HepG2 (cell line): ENCODE measurements at regions of chr15 and their contacts with region 1.

Region 1: DNA sequence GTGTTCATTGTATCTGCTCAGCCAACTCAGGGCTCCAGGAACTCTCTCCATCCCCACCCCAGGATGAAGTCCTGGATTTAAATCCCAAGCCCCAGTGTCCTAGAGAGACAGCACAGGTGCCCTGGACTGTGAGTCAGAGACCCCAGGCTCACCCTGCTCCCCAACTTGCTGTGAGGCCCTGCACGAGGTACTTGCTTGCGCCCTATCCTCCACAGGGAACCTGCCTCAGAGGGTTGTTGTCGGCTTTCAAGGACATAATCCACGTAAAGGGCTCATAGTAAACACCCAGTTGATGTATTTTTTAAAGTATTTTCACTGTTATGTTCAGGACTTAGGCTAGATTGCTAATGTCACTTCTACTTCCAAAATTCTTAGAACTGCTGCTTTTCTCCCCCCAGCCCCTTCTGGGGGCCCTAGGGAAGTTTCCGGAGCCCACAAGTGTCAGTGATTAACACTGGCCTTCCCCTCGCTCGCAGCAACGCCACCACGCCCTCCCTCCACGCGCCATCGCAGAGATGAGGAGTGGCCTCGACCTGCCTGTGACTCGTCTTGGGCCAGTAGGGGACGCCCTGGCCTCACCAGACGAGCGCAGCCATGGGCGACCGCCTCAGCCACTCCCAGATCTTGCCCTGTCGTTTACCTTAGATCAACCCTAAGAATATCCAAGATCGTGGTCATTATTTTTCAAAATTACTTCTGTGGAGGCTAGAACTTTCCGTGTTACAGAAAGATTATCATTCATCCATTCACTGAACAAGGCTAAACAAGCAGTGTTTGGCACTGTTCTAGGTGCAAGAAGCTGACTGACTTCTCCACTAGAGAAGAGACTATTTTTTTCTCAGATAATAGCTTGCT is 6.0 kb upstream of the SRP14 start:
- DNase-seq: peak; percentile 56
- ATAC-seq: peak; percentile 88
- H3K4me3 ChIP-seq: peak overlapping the region; percentile 14 to 60 (median 50); a peak in 5 of 6 replicates
- H3K27ac ChIP-seq: peak overlapping the region; percentile 15
- H3K4me1 ChIP-seq: peaks cover 54% of the 10 kb centered on the region
- H3K27me3 ChIP-seq: no peaks in the 10 kb centered on the region
- CTCF ChIP-seq: peak; percentile 99
- EP300 ChIP-seq: no peak
- POLR2A ChIP-seq: no peak
- RAD21 ChIP-seq: peak; percentile 98

Region 2: DNA sequence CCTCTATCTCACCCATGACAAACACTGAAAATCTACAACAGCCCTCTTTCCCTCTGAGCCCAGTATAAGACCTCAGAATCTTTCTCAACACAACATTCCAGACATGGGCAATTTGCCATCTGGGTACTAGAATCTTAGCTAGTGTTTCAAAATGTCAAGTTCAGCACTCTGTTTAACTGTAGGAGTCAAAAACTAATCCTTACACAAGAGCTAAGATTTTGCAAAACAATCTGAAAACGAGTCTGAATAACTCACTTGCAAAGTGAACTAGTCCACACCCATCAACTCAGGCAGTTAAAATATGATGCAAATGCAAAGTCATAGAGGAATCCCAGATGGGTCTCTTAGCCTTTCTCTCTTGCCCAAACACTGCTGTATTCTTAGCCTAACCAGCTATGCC is 192.7 kb before region 1 on chr15:
- CTCF ChIA-PET with region 1: no interaction called
- POLR2A ChIA-PET with region 1: no interaction called
- in situ Hi-C with region 1: no loop called
- intact Hi-C with region 1: no loop called
- DNase-seq: no peak
- ATAC-seq: no peak
- H3K4me3 ChIP-seq: no peak overlapping the region
- H3K27ac ChIP-seq: no peak overlapping the region
- H3K4me1 ChIP-seq: no peaks in the 10 kb centered on the region
- H3K27me3 ChIP-seq: no peaks in the 10 kb centered on the region; a peak in 1 of 5 replicates
- CTCF ChIP-seq: no peak
- EP300 ChIP-seq: no peak
- POLR2A ChIP-seq: no peak
- RAD21 ChIP-seq: no peak

Region 3: GRCh38 chr15:40069178-40070165 is 24.5 kb after region 1 on chr15:
- CTCF ChIA-PET with region 1: no interaction called
- POLR2A ChIA-PET with region 1: interaction called, 12 read pairs
- in situ Hi-C with region 1: no loop called
- intact Hi-C with region 1: no loop called
- DNase-seq: peak; percentile 76
- ATAC-seq: peak; percentile 80
- H3K4me3 ChIP-seq: peak overlapping the region; percentile 55 to 69 (median 58); a peak in 5 of 6 replicates
- H3K27ac ChIP-seq: peak overlapping the region; percentile 69
- H3K4me1 ChIP-seq: peaks cover 47% of the 10 kb centered on the region
- H3K27me3 ChIP-seq: no peaks in the 10 kb centered on the region
- CTCF ChIP-seq: no peak; the same call in 1 of the 2 replicates
- EP300 ChIP-seq: no peak
- POLR2A ChIP-seq: peak in 1 of 2 experiments; percentile 50; a peak in 1 of 4 replicates
- RAD21 ChIP-seq: peak; percentile 66

Region 4: GRCh38 chr15:40081691-40082194 is 36.8 kb after region 1 on chr15:
- CTCF ChIA-PET with region 1: no interaction called
- POLR2A ChIA-PET with region 1: interaction called, 20 read pairs
- in situ Hi-C with region 1: no loop called
- intact Hi-C with region 1: no loop called
- DNase-seq: peak; percentile 96
- ATAC-seq: peak; percentile 98
- H3K4me3 ChIP-seq: peak overlapping the region; percentile 46 to 70 (median 69)
- H3K27ac ChIP-seq: peak overlapping the region; percentile 95
- H3K4me1 ChIP-seq: peaks cover 70% of the 10 kb centered on the region
- H3K27me3 ChIP-seq: no peaks in the 10 kb centered on the region; a peak in 1 of 5 replicates
- CTCF ChIP-seq: peak; percentile 33; the same call in 1 of the 2 replicates
- EP300 ChIP-seq: peak; percentile 81 to 92; a peak in 3 of 4 replicates
- POLR2A ChIP-seq: peak; percentile 69 to 74; a peak in 3 of 4 replicates
- RAD21 ChIP-seq: no peak; the same call in 1 of the 2 replicates

Region 5: GRCh38 chr15:40098489-40099261 is 53.7 kb after region 1 on chr15:
- CTCF ChIA-PET with region 1: no interaction called
- POLR2A ChIA-PET with region 1: interaction called, 27 read pairs
- in situ Hi-C with region 1: no loop called
- intact Hi-C with region 1: no loop called
- DNase-seq: peak; percentile 97
- ATAC-seq: peak; percentile 95
- H3K4me3 ChIP-seq: peak overlapping the region in 1 of 3 experiments; percentile 24; a peak in 2 of 6 replicates
- H3K27ac ChIP-seq: peak overlapping the region; percentile 87
- H3K4me1 ChIP-seq: peaks cover 89% of the 10 kb centered on the region
- H3K27me3 ChIP-seq: no peaks in the 10 kb centered on the region
- CTCF ChIP-seq: 0 out of 2 replicates have a peak, but pooled peaks have one; percentile 20
- EP300 ChIP-seq: peak; percentile 96 to 100
- POLR2A ChIP-seq: peak; percentile 24 to 69; a peak in 2 of 4 replicates
- RAD21 ChIP-seq: peak; percentile 65; the same call in 1 of the 2 replicates

Region 6: DNA sequence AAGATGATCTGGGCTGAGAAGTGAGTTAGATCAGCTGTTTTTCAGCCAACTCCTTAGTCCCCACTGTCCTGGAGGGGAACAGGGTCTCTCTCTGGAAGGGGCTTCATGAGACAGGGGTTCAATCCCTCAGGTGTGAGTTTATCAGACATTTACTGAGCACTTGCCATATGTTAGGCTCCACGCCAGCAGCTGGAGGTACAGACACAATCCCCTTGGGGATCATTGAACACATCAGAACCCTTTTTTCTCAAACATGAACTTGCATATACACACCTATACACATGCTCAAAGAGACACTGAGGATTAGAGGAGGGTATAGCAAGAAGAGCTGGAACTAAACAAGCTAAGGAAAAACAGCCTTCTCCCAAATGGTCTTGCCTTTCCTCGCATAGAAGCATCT is 69.3 kb after region 1 on chr15:
- CTCF ChIA-PET with region 1: interaction called, 7 read pairs
- POLR2A ChIA-PET with region 1: interaction called, 60 read pairs
- in situ Hi-C with region 1: loop called (anchors 5 kb)
- intact Hi-C with region 1: loop called (anchors 2 kb)
- DNase-seq: no peak
- ATAC-seq: no peak
- H3K4me3 ChIP-seq: no peak overlapping the region
- H3K27ac ChIP-seq: no peak overlapping the region
- H3K4me1 ChIP-seq: peaks cover 53% of the 10 kb centered on the region
- H3K27me3 ChIP-seq: no peaks in the 10 kb centered on the region
- CTCF ChIP-seq: no peak
- EP300 ChIP-seq: no peak
- POLR2A ChIP-seq: no peak
- RAD21 ChIP-seq: no peak

Region 7: DNA sequence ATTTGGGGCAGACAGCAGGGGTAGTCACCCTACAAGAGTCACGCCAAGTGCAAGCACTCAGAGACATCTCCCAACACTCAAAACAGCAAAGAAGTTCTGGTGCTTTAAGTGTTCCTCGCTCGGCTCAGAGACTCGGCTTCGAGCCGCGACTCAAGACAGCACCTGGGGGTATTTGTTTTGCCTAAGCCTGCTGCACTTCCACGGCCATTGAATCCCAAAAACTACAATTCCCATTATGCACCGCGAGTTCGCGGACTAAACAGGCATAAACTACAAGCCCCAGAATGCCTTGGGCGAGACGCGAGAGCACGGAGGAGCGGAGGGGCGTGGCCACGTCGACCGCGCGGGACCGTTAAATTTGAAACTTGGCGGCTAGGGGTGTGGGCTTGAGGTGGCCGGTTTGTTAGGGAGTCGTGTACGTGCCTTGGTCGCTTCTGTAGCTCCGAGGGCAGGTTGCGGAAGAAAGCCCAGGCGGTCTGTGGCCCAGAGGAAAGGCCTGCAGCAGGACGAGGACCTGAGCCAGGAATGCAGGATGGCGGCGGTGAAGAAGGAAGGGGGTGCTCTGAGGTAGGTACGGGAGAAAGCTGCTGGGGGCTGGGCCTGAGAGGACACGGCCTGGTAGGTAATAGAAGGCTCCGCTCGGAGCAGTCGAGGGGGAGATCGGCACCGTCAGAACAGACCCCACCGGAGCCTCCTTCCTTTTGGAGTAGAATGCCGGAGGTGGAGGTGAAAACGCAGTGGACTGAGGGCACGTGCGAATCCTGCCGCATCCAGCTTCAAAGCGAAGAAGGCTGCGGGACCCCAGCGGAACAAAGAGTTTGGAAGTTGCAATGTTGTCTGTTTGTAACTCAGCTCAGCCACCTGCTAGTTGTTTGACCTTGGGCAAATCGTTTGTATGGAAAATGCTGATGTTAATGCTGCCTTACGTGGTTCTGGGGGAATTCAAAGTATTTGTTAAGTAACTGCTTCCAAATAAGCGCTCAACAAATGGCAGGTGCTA is 116.0 kb after region 1 on chr15 and contains the start of gene BUB1B:
- CTCF ChIA-PET with region 1: no interaction called
- POLR2A ChIA-PET with region 1: interaction called, 4 read pairs
- in situ Hi-C with region 1: loop called (anchors 10 kb)
- intact Hi-C with region 1: loop called (anchors 5 kb)
- DNase-seq: peak; percentile 95
- ATAC-seq: peak; percentile 91
- H3K4me3 ChIP-seq: peak within 1 kb of the TSS; percentile 77 to 98 (median 91)
- H3K27ac ChIP-seq: peak within 1 kb of the TSS; percentile 74
- H3K4me1 ChIP-seq: peaks cover 58% of the 10 kb centered on the region
- H3K27me3 ChIP-seq: no peaks in the 10 kb centered on the region; a peak in 2 of 5 replicates
- CTCF ChIP-seq: peak; percentile 15; the same call in 1 of the 2 replicates
- EP300 ChIP-seq: no peak
- POLR2A ChIP-seq: peak; percentile 62 to 69; a peak in 3 of 4 replicates
- RAD21 ChIP-seq: no peak; the same call in 1 of the 2 replicates
- total RNA-seq, gene BUB1B: 63.5 and 71.9 TPM in 2 replicates

Region 8: DNA sequence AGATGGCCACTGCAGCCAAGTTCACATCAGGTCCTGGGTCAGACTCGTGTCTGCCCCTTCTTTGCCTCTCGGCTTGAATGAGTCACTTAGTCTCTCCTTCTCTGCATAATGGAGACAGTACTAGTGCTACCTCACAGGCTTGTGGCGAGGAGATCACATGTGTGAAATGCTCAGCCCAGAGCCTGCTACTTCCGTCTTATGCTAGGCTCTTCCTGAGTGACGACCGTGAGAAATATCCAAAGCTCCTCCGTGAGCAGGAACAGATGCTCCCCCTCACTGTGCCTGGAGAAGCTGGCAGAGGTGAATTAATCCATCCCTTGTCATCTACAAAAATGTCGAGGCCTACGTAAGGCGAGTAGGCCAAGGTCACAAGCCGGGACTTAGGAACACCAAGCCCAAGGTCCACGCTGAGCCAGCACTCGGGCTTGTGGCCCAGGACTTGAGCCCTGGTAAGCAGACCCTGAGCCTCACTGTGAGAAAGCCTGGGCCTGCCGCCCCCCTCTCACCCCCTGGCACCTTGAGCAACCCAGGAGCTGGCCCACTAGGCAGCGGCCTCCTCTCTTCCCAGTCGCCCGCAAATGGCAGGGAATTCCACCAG is 211.8 kb after region 1 on chr15:
- CTCF ChIA-PET with region 1: no interaction called
- POLR2A ChIA-PET with region 1: no interaction called
- in situ Hi-C with region 1: no loop called
- intact Hi-C with region 1: no loop called
- DNase-seq: no peak
- ATAC-seq: peak; percentile 18
- H3K4me3 ChIP-seq: no peak overlapping the region
- H3K27ac ChIP-seq: no peak overlapping the region
- H3K4me1 ChIP-seq: peaks cover 20% of the 10 kb centered on the region
- H3K27me3 ChIP-seq: peaks cover 4 to 52% of the 10 kb centered on the region in 2 experiments; a peak in 4 of 5 replicates
- CTCF ChIP-seq: no peak
- EP300 ChIP-seq: no peak
- POLR2A ChIP-seq: no peak
- RAD21 ChIP-seq: no peak

Region 9: GRCh38 chr15:40274350-40275274 is 229.7 kb after region 1 on chr15:
- CTCF ChIA-PET with region 1: interaction called, 19 read pairs
- POLR2A ChIA-PET with region 1: no interaction called
- in situ Hi-C with region 1: loop called (anchors 5 kb)
- intact Hi-C with region 1: loop called (anchors 1 kb)
- DNase-seq: peak; percentile 60
- ATAC-seq: peak; percentile 14
- H3K4me3 ChIP-seq: peak overlapping the region in 1 of 3 experiments; percentile 41; a peak in 1 of 6 replicates
- H3K27ac ChIP-seq: no peak overlapping the region
- H3K4me1 ChIP-seq: peaks cover 43% of the 10 kb centered on the region
- H3K27me3 ChIP-seq: peaks cover 1 to 40% of the 10 kb centered on the region in 2 experiments; a peak in 4 of 5 replicates
- CTCF ChIP-seq: peak; percentile 99
- EP300 ChIP-seq: no peak
- POLR2A ChIP-seq: no peak
- RAD21 ChIP-seq: peak; percentile 97